Activated CD8-positive, alpha-beta T cell treated with anti-CD3 and anti-CD28 coated beads for 36 hours (primary cell): ENCODE measurements at regions of chr11 and their contacts with region 1.

Region 1: DNA sequence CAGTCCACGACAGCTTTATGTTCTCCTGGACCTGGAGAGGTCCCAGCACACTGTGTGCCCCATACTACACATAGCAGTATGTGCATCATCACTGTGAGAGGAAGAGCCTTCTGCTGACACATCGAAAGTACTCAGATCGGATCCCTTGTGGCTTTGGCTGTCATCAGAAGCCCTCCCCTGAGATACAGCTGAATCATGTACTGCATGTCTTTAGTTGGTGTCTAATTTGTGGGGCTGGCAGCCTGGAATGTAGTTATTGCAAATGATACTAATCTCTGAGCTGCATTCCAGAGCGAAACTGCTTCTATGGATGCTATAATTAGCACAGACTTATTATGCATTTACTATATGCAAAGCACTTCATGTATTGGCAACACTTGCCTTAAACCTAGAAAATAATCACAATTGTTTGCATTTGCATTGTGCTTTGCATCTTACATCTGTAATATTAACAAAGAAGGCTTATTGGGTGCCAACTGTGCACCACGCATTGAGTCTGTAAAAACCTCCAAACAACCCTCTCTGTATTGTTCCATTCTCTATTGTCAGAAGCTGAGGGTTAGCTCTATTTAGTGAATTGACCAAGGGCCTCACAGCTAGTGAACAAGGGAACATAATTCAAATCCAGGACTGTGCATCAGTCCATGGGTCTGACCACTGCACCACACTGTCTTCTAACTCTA is 89.2 kb upstream of the CRTAM start:
- DNase-seq: peak; percentile 83
- ATAC-seq: peak; percentile 73
- H3K4me3 Mint-ChIP-seq: no peak overlapping the region
- H3K27ac Mint-ChIP-seq: no peak overlapping the region
- H3K4me1 Mint-ChIP-seq: peaks cover 30% of the 10 kb centered on the region
- H3K27me3 Mint-ChIP-seq: no peaks in the 10 kb centered on the region
- CTCF ChIP-seq: no peak

Region 2: DNA sequence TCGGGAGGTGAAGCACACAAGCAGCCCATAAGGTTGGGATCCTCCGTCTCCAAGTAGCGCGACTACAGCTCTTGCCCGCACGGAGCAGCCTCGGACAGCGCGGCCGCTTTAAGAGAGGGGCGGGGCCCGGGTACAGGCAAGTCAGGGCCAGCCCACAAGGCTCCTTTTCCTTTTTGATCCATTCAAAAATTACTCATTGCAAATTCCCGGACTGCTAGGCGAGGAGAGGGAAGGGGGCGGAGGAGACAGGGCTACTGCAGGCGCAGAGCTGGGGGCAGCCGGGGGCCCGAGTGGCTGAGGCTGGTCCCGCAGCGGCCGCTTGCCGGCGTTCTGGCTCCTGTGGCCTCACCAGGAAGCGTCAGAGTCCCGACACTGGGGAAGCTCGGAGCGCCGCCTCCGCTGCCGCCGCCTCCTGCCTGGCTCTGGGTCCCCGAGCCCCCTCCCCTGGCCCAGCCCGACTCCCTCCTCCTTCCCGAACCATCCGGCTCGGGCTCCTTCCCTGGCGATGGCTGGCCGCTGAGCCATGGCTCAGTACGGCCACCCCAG is 93.5 kb before region 1 on chr11 and contains the start of gene UBASH3B:
- CTCF ChIA-PET with region 1: interaction called, 88 read pairs
- POLR2A ChIA-PET with region 1: interaction called, 27 read pairs
- intact Hi-C with region 1: no loop called
- DNase-seq: peak; percentile 76
- ATAC-seq: peak; percentile 75
- H3K4me3 Mint-ChIP-seq: peak within 1 kb of the TSS; percentile 97
- H3K27ac Mint-ChIP-seq: peak within 1 kb of the TSS; percentile 91
- H3K4me1 Mint-ChIP-seq: peaks cover 31% of the 10 kb centered on the region
- H3K27me3 Mint-ChIP-seq: no peaks in the 10 kb centered on the region
- CTCF ChIP-seq: peak; percentile 11
- total RNA-seq, gene UBASH3B: 36.1 to 40.6 TPM

Region 3: GRCh38 chr11:122874991-122875390 is 125.8 kb after region 1 on chr11:
- CTCF ChIA-PET with region 1: no interaction called
- POLR2A ChIA-PET with region 1: no interaction called
- intact Hi-C with region 1: no loop called
- DNase-seq: no peak
- ATAC-seq: no peak
- H3K4me3 Mint-ChIP-seq: no peak overlapping the region
- H3K27ac Mint-ChIP-seq: no peak overlapping the region
- H3K4me1 Mint-ChIP-seq: peaks cover 14% of the 10 kb centered on the region
- H3K27me3 Mint-ChIP-seq: no peaks in the 10 kb centered on the region
- CTCF ChIP-seq: no peak